Psoas muscle (tissue), 8 donors: ENCODE measurements at regions of chr18 and their contacts with region 1.

Region 1: DNA sequence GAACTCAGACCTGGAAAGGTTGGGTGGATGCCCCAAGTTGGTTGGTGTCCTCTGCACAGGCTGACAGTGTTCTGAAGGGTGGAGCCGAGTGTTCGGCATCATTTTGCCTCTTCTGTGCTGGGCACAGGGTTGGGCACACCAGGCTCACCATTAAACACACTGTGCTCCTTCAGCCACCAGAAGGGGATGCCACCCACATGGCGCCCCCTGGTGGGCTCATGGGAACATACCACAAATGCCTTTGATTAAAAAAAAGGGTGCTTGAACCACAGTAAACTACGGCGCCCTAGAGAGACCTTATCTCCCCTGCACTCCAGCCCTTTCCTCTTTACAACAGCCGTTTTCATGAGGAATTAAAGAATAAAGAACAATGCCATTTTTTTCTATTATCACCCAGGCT is 89.4 kb downstream of the CELF4 start:
- DNase-seq: no peak
- ATAC-seq: no peak
- H3K4me3 ChIP-seq: no peak overlapping the region
- H3K27ac ChIP-seq: no peak overlapping the region
- H3K4me1 ChIP-seq: no peaks in the 10 kb centered on the region
- H3K27me3 ChIP-seq: peaks cover 0 to 28% (median 6%) of the 10 kb centered on the region in 3 donors
- CTCF ChIP-seq: peak; percentile 25

Region 2: GRCh38 chr18:37385846-37386778 is 90.1 kb before region 1 on chr18:
- intact Hi-C with region 1: loop called in 1 of 2 experiments (anchors 2 kb)
- DNase-seq: no peak
- ATAC-seq: no peak
- H3K4me3 ChIP-seq: no peak overlapping the region
- H3K27ac ChIP-seq: no peak overlapping the region
- H3K4me1 ChIP-seq: no peaks in the 10 kb centered on the region
- H3K27me3 ChIP-seq: peaks cover 0 to 7% (median 3%) of the 10 kb centered on the region in 3 donors
- CTCF ChIP-seq: peak; percentile 74